Head of caudate nucleus (tissue), 42 donors: ENCODE measurements at regions of chr4 and their contacts with region 1.

Region 1: GRCh38 chr4:139554893-139555704 is 920 bp downstream of the SETD7 start:
- DNase-seq: peak; percentile 70 to 94 (median 86)

Region 2: GRCh38 chr4:139453371-139454110 is 101.6 kb before region 1 on chr4:
- intact Hi-C with region 1: loop called (anchors 2 kb)
- DNase-seq: peak; percentile 86 to 97 (median 93)